ENCODE measurements at regions of chr2 and their contacts with region 1.

Region 1: GRCh38 chr2:9139491-9140443 is 66.8 kb upstream of the ASAP2 start:
- DNase-seq: peak; percentile 76
- CTCF ChIP-seq: peak; percentile 89

Region 2: DNA sequence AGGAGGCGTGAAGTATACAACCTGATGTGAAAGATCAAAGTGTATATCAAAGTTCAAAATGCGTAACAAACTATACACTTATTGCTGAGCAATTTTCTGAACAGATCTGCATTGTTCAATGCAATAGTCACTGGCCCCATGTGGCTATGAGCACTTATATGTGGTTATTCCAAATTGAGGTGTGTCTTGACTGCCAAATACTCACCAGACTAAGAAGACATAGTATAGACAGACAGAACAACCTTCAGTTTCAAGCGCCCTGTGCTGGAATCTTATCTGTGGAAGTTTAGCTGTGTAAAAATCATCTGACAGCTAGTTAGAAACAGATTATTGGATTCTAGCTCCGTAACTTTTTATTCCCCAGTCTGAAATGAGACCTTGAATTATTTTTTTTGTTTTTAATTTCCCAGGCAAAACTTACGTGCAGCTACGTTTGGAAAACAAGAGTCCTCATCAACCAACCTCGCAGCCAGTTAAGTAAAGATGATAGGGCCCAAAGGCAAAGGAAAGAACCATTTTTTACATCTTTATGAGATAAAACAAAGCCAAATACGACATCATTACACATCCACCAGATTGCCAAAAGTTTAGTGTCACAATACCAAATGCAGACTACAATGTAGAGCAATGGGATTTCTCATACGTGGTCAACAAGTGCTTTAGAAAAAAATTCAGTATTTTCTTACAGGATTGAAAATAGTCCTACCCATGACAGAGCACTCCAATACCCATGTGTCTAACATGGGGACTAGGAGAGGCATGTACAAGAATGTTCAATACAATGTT is 173.5 kb before region 1 on chr2:
- CTCF ChIA-PET with region 1: no interaction called
- POLR2A ChIA-PET with region 1: no interaction called
- DNase-seq: no peak
- CTCF ChIP-seq: no peak

Region 3: GRCh38 chr2:9112079-9112721 is 27.6 kb before region 1 on chr2:
- CTCF ChIA-PET with region 1: interaction called, 21 read pairs
- POLR2A ChIA-PET with region 1: no interaction called
- DNase-seq: no peak
- CTCF ChIP-seq: no peak

Region 4: GRCh38 chr2:9124231-9124741 is 15.5 kb before region 1 on chr2:
- CTCF ChIA-PET with region 1: interaction called, 10 read pairs
- POLR2A ChIA-PET with region 1: no interaction called
- DNase-seq: no peak
- CTCF ChIP-seq: no peak

Region 5: GRCh38 chr2:9230881-9231670 is 91.3 kb after region 1 on chr2:
- CTCF ChIA-PET with region 1: no interaction called
- POLR2A ChIA-PET with region 1: no interaction called
- DNase-seq: no peak
- CTCF ChIP-seq: no peak

Measured in GM10248 (cell line).